Posterior vena cava (tissue), 2 donors: ENCODE measurements at regions of chr19 and their contacts with region 1.

Region 1: DNA sequence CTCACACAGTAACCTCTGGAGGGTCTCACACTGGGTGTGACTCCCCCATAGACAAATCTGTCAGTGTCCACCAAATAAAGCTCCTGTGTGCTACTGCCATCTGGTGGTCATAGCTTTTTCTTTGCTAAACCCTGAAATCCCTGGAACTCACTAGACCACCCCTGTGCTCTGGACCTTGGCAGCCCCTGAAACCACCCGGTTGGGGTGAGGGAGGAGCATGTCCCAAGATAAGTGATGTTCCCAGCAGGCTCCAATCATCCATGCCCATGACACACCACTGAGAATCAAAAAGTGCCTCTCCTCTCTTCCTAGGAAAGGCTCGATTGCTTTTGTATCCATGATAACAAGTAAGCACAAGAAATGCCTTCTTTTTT is 6.5 kb upstream of the HSD17B14 start:
- DNase-seq: no peak

Region 2: GRCh38 chr19:48910803-48911202 is 68.0 kb after region 1 on chr19:
- intact Hi-C with region 1: loop called in 1 of 2 experiments (anchors 2 kb)
- DNase-seq: no peak